B cell (primary cell): ENCODE measurements at regions of chr2 and their contacts with region 1.

Region 1: GRCh38 chr2:47323009-47323821 is 79.7 kb upstream of the MSH2 start:
- DNase-seq: peak; percentile 84
- ATAC-seq: peak; percentile 100
- H3K4me3 ChIP-seq: no peak overlapping the region
- H3K4me3 Mint-ChIP-seq: no peak overlapping the region
- H3K27ac ChIP-seq: no peak overlapping the region
- H3K27ac Mint-ChIP-seq: no peak overlapping the region
- H3K4me1 ChIP-seq: peaks cover 10 to 31% of the 10 kb centered on the region in 2 donors
- H3K4me1 Mint-ChIP-seq: peaks cover 8% of the 10 kb centered on the region
- H3K27me3 ChIP-seq: peaks cover 0 to 3% (median 0%) of the 10 kb centered on the region in 4 experiments
- H3K27me3 Mint-ChIP-seq: no peaks in the 10 kb centered on the region
- CTCF ChIP-seq: peak; percentile 92

Region 2: GRCh38 chr2:46650556-46651001 is 672.6 kb before region 1 on chr2:
- CTCF ChIA-PET with region 1: interaction called, 11 read pairs
- POLR2A ChIA-PET with region 1: no interaction called
- intact Hi-C with region 1: loop called (anchors 5 kb)
- DNase-seq: peak; percentile 83
- ATAC-seq: peak; percentile 70
- H3K4me3 ChIP-seq: no peak overlapping the region
- H3K4me3 Mint-ChIP-seq: no peak overlapping the region
- H3K27ac ChIP-seq: no peak overlapping the region
- H3K27ac Mint-ChIP-seq: no peak overlapping the region
- H3K4me1 ChIP-seq: no peaks in the 10 kb centered on the region
- H3K4me1 Mint-ChIP-seq: no peaks in the 10 kb centered on the region
- H3K27me3 ChIP-seq: no peaks in the 10 kb centered on the region
- H3K27me3 Mint-ChIP-seq: peaks cover 6% of the 10 kb centered on the region
- CTCF ChIP-seq: peak; percentile 97

Region 3: DNA sequence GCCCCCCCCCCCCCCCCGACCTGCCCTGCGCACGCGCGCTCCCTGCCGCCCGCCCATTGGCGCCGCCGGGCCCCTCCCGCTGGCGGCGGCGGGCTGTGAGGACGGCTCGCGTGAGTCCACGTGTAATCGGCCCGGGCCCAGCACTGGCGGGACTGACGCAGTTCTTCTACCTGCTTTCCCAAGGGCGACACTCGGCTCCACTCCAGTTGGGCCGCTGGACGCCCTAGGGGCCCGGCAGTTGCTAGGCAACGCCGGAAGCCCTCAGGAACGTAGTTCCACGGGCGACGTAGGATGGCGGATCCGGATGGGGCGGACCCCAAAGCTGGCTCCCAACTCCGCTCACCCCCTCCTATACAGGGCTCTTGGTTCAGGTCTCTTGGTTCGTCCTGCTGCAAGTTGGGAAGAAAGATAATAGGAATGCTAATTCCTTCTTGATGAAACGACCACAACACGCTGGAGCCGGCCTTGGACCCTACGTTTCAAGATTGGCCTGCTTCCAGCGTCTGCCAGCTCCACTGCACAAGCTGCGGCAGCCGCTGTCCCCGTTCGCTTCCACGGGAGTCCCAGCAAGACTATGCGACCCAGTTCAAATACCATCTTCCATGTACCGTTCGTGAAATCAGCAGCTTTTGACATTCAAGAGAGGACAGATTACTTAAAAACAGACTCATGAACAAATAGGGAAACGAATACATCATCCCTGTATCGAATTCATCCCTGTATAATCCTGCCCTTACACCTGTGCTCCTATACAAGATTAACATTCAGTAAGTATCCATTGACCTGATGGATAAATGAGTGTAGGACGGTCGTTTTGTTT is 407.2 kb before region 1 on chr2:
- CTCF ChIA-PET with region 1: interaction called, 40 read pairs
- POLR2A ChIA-PET with region 1: no interaction called
- intact Hi-C with region 1: loop called (anchors 1 kb)
- DNase-seq: peak; percentile 93
- ATAC-seq: peak; percentile 83
- H3K4me3 ChIP-seq: peak overlapping the region; percentile 88 to 98 (median 96)
- H3K4me3 Mint-ChIP-seq: peak overlapping the region; percentile 96
- H3K27ac ChIP-seq: peak overlapping the region; percentile 45 to 87
- H3K27ac Mint-ChIP-seq: peak overlapping the region; percentile 91
- H3K4me1 ChIP-seq: peaks cover 31 to 55% of the 10 kb centered on the region in 2 donors
- H3K4me1 Mint-ChIP-seq: peaks cover 63% of the 10 kb centered on the region
- H3K27me3 ChIP-seq: no peaks in the 10 kb centered on the region
- H3K27me3 Mint-ChIP-seq: no peaks in the 10 kb centered on the region
- CTCF ChIP-seq: no peak

Region 4: DNA sequence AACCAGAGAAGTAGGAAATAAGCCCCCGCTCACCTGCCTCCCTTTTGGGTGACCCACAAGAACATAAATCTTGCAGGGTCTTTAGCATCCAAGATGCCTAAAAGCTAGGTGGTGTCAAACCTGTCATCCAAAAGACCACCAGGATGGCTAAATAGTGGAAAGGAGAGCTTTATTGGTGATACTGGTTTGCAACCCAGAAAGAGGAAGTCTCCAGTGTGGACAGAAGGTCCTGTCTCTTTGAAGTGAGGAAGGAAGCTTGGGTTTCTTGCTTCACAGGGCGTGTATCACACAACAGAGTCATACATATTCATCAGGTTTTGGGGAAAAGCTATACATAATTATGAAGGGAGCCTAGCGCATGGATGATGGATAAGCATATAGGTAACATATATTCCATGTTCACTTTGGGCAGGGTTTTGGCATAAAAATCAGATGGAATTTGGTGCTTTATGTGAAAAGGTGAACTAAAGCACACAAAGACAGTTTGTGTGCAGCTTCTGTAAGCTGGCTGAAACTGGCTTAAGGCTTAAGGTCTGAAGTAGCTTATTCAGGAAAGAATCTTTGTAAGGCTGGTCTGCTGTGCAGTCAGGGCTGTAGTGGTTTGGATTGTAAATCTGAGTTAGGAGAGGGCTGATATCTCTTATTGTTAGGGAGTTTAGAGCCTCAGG is 22.5 kb before region 1 on chr2:
- CTCF ChIA-PET with region 1: interaction called, 42 read pairs
- POLR2A ChIA-PET with region 1: no interaction called
- intact Hi-C with region 1: no loop called
- DNase-seq: peak; percentile 72
- ATAC-seq: peak; percentile 91
- H3K4me3 ChIP-seq: peak overlapping the region; percentile 5 to 58 (median 36)
- H3K4me3 Mint-ChIP-seq: peak overlapping the region; percentile 81
- H3K27ac ChIP-seq: peak overlapping the region; percentile 49 to 62
- H3K27ac Mint-ChIP-seq: peak overlapping the region; percentile 53
- H3K4me1 ChIP-seq: peaks cover 27 to 35% of the 10 kb centered on the region in 2 donors
- H3K4me1 Mint-ChIP-seq: peaks cover 40% of the 10 kb centered on the region
- H3K27me3 ChIP-seq: peaks cover 0 to 9% (median 0%) of the 10 kb centered on the region in 4 experiments
- H3K27me3 Mint-ChIP-seq: no peaks in the 10 kb centered on the region
- CTCF ChIP-seq: no peak

Region 5: DNA sequence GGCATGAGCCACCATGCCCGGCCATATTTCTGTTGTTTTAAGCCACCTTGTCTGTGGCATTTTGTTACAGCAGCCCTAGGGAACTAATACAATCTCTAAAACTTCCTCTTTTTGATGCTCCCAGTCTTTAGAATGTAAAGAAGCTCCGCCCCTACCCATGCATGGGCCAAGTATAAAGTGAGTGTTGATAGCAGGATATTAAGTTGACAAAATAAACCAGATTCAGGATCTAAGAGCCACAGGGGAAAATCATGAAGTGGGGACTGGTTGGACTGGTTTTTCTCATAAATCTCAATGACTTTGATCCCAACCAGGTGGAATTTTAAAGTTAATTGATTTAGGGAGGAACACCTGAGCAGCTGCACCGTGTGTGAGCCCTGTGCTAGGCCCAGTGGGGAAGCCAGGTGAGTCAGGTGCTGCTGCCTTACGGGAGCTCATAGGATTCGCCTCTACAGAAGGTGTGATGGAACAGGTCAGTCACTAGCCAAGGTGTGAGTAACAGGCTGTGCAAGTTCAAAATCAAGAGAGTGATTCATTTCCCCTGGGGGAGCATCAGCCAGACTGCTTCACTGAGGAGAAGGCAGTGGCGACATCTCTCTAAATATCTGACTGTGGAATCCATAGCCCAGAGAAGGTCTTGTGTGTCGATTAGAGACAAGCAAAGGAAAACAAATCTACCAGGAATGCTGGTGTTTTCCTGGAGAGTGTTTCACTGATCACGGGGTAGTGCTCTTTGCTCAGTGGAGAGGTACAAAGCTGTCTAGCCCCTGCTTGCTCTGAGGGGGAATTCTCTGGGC is 16.7 kb after region 1 on chr2:
- CTCF ChIA-PET with region 1: interaction called, 23 read pairs
- POLR2A ChIA-PET with region 1: no interaction called
- intact Hi-C with region 1: no loop called
- DNase-seq: no peak
- ATAC-seq: no peak
- H3K4me3 ChIP-seq: no peak overlapping the region
- H3K4me3 Mint-ChIP-seq: no peak overlapping the region
- H3K27ac ChIP-seq: no peak overlapping the region
- H3K27ac Mint-ChIP-seq: no peak overlapping the region
- H3K4me1 ChIP-seq: peaks cover 21 to 26% of the 10 kb centered on the region in 2 donors
- H3K4me1 Mint-ChIP-seq: peaks cover 30% of the 10 kb centered on the region
- H3K27me3 ChIP-seq: peaks cover 0 to 7% (median 1%) of the 10 kb centered on the region in 4 experiments
- H3K27me3 Mint-ChIP-seq: peaks cover 8% of the 10 kb centered on the region
- CTCF ChIP-seq: no peak